Lower leg skin (tissue), 4 donors: ENCODE measurements at regions of chr1 and their contacts with region 1.

Region 1: DNA sequence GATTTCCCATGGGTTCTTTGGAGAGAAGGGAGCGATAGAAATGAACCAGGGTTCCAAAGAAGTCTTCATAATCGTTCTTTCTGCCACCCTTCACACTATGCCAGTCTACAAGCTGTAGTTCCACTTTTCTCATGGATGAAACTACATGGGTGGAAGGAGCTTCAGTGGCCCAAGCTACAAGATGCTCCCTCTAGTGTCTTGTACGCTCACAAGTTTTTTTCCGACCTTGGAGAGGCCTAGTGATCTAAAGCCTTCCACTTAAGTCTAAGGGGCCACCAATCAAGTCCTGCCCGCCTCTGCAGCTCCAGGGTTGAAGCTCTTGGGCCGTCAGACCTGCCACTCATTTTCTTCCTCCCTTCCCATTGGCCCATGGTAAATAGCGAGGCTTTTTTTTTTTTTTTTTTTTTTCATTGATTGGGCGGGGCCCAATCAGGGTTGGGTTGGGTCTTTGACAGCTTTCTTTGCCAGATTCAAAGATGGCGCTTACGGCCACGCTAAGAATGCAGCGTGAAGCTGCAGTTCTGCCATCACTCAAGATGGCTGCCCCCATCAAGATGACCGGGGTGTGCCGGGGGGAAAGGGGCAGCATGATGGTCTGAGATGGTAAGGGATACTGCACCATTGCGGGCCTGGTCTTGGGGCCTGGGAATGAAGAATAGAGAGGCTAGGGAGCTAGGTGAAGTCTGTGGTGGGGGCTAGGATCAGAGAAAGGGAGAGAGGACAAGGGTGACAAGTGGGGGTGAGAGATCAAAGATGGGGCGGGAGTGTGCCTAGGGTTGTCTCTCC is at the start of gene TOMM40L:
- DNase-seq: peak; percentile 96 to 97
- H3K4me3 ChIP-seq: peak within 1 kb of the TSS; percentile 40
- CTCF ChIP-seq: peak in 1 of 3 donors; percentile 40
- POLR2A ChIP-seq: no peak
- total RNA-seq, gene TOMM40L: 3.8 to 11.9 (median 7.7) TPM

Region 2: GRCh38 chr1:161021165-161021960 is 204.4 kb before region 1 on chr1:
- intact Hi-C with region 1: no loop called
- DNase-seq: peak; percentile 89 to 97
- H3K4me3 ChIP-seq: peak overlapping the region; percentile 1
- CTCF ChIP-seq: no peak
- POLR2A ChIP-seq: no peak

Region 3: GRCh38 chr1:161292631-161293030 is 66.9 kb after region 1 on chr1:
- intact Hi-C with region 1: loop called (anchors 5 kb)
- DNase-seq: no peak
- H3K4me3 ChIP-seq: no peak overlapping the region
- CTCF ChIP-seq: no peak
- POLR2A ChIP-seq: no peak

Region 4: GRCh38 chr1:161389691-161390558 is 164.2 kb after region 1 on chr1:
- intact Hi-C with region 1: loop called (anchors 10 kb)
- DNase-seq: peak; percentile 97 to 100
- H3K4me3 ChIP-seq: peak overlapping the region; percentile 27
- CTCF ChIP-seq: no peak
- POLR2A ChIP-seq: peak in 1 of 2 donors; percentile 68